HEK293 (cell line): ENCODE measurements at regions of chr17 and their contacts with region 1.

Region 1: GRCh38 chr17:75749545-75750389 is 15.2 kb downstream of the GALK1 start:
- H3K4me3 ChIP-seq: no peak overlapping the region; the same call in 1 of the 2 replicates
- H3K27ac ChIP-seq: no peak overlapping the region
- H3K4me1 ChIP-seq: no peaks in the 10 kb centered on the region
- CTCF ChIP-seq: peak; percentile 97

Region 2: GRCh38 chr17:75589012-75589918 is 160.5 kb before region 1 on chr17:
- CTCF ChIA-PET with region 1: interaction called, 15 read pairs
- POLR2A ChIA-PET with region 1: no interaction called
- H3K4me3 ChIP-seq: peak overlapping the region; percentile 48
- H3K27ac ChIP-seq: peak overlapping the region; percentile 60; the same call in 1 of the 2 replicates
- H3K4me1 ChIP-seq: peaks cover 2% of the 10 kb centered on the region; the same call in 1 of the 2 replicates
- CTCF ChIP-seq: peak; percentile 58

Region 3: DNA sequence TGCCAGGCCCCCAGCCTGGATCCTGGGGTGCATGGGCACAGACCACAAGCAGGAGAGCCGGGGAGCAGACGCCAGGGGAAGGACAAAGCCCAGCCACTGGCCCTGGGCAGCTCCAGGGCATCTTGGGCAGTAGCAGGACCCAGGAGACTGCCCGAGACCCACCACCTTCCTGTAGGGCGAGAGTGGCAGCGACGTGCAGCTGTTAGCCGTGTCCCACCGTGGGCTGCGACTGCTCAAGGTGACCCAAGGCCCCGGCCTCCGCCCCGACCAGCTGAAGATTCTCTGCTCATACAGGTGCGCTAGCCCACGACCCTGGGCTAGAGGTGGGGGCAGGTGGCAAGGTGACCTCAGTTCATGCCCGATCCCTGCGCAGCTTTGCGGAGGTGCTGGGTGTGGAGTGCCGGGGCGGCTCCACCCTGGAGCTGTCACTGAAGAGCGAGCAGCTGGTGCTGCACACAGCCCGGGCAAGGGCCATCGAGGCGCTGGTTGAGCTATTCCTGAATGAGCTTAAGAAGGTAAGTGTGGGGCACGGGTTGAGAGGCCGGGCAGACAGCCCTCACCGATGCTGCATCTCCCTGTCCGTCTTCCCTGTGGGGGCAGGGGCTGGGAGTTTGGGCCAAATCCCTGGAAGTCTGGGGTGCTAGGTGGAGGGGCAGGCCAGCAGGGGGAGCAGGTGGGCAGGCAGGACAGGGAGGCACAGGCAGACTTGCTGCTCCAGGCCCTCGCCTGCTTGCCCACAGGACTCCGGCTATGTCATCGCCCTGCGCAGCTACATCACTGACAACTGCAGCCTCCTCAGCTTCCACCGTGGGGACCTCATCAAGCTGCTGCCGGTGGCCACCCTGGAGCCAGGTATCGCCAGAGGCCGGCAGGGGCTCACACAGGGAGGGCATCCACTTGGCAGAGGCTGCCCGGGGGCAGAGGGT is 130.0 kb before region 1 on chr17:
- CTCF ChIA-PET with region 1: interaction called, 50 read pairs
- POLR2A ChIA-PET with region 1: no interaction called
- H3K4me3 ChIP-seq: no peak overlapping the region
- H3K27ac ChIP-seq: no peak overlapping the region
- H3K4me1 ChIP-seq: no peaks in the 10 kb centered on the region
- CTCF ChIP-seq: peak; percentile 92

Region 4: DNA sequence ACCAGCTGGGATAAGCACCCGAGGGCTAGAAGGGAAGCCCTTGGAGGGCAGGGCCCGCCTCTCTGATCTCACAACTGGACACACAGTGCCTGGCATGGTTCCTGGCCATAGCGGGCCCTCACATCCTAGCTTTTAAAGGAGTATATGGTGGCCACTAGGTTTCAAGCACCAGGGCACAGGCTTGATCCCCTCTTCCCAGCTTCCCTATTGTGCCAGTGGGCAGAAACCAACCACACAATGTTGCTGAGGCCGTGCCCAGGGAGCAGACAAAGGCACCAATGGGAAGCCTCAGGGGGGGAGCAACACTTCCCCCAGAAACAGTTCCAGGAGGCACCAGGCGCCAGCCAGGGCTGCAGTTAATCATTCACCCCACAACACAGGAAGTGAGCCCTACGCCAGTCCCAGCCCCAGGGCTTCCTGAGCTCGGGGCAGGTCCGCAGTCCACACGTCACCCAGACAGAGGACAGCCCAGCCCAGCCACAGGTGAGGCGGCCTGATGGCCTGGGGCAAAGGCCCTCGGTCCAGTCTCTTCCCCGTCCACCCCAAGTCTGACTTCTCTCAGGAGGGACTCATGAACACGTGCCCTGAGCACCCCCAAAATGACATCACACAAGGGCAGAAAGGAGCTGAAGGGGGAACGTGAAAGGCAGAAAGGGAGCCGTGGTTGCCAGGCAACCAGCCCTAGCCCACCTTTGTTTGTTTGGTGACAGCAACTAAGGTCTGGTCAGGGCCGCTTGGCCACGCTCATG is 103.7 kb before region 1 on chr17:
- CTCF ChIA-PET with region 1: interaction called, 67 read pairs
- POLR2A ChIA-PET with region 1: no interaction called
- H3K4me3 ChIP-seq: no peak overlapping the region
- H3K27ac ChIP-seq: no peak overlapping the region
- H3K4me1 ChIP-seq: no peaks in the 10 kb centered on the region
- CTCF ChIP-seq: no peak

Region 5: DNA sequence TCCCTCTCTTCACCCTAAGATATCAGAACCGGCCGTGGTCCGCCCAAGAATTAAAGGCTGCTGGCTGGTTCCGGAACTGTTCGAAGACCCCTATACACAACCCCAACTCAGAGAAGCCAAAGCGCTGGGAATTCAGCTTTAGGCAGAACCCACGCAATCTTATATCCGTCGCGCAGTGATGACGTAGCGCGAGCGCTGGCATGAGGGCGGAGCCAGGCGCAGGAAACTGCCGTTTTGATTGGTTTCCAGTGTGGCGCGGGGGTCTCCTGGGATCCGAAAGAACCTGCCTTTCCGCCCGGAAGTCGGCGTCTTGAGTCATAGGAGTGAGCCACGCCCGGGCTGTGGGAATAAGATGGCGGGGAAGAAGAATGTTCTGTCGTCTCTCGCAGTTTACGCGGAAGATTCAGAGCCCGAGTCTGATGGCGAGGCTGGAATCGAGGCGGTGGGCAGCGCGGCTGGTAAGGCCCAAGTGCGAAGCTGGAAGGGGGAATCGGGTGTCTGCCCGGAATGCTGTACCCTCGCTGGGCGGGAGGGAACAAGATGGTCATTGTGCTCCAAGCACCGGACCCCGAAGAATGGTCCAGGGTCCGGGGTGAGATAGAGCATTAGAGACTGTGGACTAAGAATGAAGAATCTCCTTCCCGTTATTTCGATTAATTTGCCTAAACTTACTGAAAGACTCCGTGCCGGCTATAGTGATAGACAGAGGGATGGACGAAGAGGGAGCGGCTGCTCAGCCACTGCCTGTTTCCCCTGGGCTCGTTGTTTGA is 82.6 kb before region 1 on chr17 and contains the starts of genes RECQL5 and SAP30BP:
- CTCF ChIA-PET with region 1: interaction called, 308 read pairs
- POLR2A ChIA-PET with region 1: interaction called, 11 read pairs
- H3K4me3 ChIP-seq: peak within 1 kb of the TSS; percentile 95
- H3K27ac ChIP-seq: 0 out of 2 replicates have a peak within 1 kb of the TSS, but pooled peaks have one; percentile 42
- H3K4me1 ChIP-seq: peaks cover 10% of the 10 kb centered on the region; the same call in 1 of the 2 replicates
- CTCF ChIP-seq: no peak

Region 6: GRCh38 chr17:75707131-75707571 is 42.6 kb before region 1 on chr17:
- CTCF ChIA-PET with region 1: interaction called, 10 read pairs
- POLR2A ChIA-PET with region 1: interaction called, 3 read pairs
- H3K4me3 ChIP-seq: no peak overlapping the region
- H3K27ac ChIP-seq: no peak overlapping the region
- H3K4me1 ChIP-seq: no peaks in the 10 kb centered on the region
- CTCF ChIP-seq: no peak

Region 7: GRCh38 chr17:75738218-75738802 is 11.5 kb before region 1 on chr17:
- CTCF ChIA-PET with region 1: interaction called, 106 read pairs
- POLR2A ChIA-PET with region 1: no interaction called
- H3K4me3 ChIP-seq: no peak overlapping the region
- H3K27ac ChIP-seq: no peak overlapping the region
- H3K4me1 ChIP-seq: no peaks in the 10 kb centered on the region
- CTCF ChIP-seq: no peak